ENCODE measurements at regions of chr12 and their contacts with region 1.

Region 1: GRCh38 chr12:4829161-4829792 is 80.4 kb upstream of the KCNA1 start:
- DNase-seq: no peak
- ATAC-seq: peak; percentile 87
- H3K4me3 Mint-ChIP-seq: peak overlapping the region; percentile 76
- H3K27ac Mint-ChIP-seq: peak overlapping the region; percentile 93
- H3K4me1 Mint-ChIP-seq: peaks cover 87% of the 10 kb centered on the region
- H3K27me3 Mint-ChIP-seq: no peaks in the 10 kb centered on the region
- CTCF ChIP-seq: no peak

Region 2: DNA sequence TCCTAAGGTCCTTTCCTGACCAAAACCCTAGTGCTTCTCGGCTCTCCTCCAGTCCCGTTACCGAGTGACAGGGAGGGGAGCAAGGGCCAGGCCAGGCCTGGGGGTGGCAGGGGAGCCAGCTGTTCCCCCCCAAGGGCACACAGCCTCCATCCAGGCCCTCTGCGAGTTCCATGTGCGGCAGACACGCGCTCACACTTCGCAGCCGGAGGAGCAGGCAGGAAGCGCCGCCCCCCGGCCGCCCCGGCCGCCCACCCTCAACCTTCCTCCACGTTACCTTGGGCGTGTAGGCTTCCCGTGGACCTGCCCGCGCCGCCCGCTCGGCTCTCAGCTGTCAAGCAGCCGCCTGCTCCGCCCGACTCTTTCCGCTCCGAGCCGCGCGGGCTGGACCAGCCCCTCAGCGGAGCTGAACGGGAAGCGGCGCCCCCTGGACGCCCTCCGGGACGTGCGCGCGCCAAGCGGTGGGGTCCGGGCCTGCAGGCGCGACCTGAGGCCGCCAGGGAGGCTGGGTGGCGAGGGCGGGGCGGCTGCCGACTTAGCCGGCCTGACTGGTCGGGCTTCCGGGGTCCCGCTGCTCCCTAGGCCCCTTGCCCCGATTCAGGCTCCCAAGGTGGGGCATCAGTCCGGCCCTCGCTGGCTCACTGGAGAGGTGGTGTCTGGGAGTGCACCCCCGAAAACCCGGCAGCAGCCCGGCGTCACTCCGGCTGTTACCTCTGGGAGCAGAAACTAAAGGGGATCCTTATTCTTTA is 1076.4 kb before region 1 on chr12 and contains the start of gene CRACR2A:
- CTCF ChIA-PET with region 1: no interaction called
- POLR2A ChIA-PET with region 1: no interaction called
- intact Hi-C with region 1: loop called (anchors 5 kb)
- DNase-seq: peak; percentile 85
- ATAC-seq: peak; percentile 87
- H3K4me3 Mint-ChIP-seq: peak within 1 kb of the TSS; percentile 88
- H3K27ac Mint-ChIP-seq: peak within 1 kb of the TSS; percentile 93
- H3K4me1 Mint-ChIP-seq: peaks cover 25% of the 10 kb centered on the region
- H3K27me3 Mint-ChIP-seq: no peaks in the 10 kb centered on the region
- CTCF ChIP-seq: no peak
- total RNA-seq, gene CRACR2A: 22.7 and 25.8 TPM in 2 replicates

Region 3: GRCh38 chr12:4894019-4894418 is 64.7 kb after region 1 on chr12:
- CTCF ChIA-PET with region 1: no interaction called
- POLR2A ChIA-PET with region 1: no interaction called
- intact Hi-C with region 1: no loop called
- DNase-seq: no peak
- ATAC-seq: no peak
- H3K4me3 Mint-ChIP-seq: no peak overlapping the region
- H3K27ac Mint-ChIP-seq: no peak overlapping the region
- H3K4me1 Mint-ChIP-seq: no peaks in the 10 kb centered on the region
- H3K27me3 Mint-ChIP-seq: peaks cover 26% of the 10 kb centered on the region
- CTCF ChIP-seq: no peak

Region 4: DNA sequence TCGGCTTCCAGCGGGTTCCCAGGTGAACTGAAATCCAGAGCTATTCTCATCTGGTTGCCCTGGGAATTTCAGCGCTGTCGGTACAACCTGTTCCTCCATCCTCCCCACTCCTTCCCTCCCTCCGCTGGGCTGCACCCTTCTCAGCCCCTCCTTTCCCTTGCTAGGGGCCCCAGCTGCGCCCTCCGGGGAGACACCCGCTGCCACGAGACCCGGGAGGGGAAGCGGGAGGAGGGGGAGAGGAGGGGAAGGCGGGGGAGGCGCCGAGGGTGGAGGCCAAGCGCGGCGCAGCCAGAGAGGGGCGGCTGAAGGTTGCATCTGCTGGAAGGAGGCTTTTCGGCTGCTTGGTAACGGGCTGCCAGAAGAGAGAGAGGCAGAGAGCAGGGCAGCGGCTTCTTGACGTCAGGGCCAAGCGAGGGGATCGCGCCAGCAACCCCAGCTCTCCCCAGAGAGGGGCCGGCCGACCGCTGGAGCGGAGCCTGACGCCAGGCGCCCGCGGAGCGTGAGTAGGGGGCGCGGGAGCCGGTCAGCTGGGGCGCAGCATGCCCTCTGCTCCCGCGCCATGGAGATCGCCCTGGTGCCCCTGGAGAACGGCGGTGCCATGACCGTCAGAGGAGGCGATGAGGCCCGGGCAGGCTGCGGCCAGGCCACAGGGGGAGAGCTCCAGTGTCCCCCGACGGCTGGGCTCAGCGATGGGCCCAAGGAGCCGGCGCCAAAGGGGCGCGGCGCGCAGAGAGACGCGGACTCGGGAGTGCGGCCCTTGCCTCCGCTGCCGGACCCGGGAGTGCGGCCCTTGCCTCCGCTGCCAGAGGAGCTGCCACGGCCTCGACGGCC is 214.5 kb after region 1 on chr12 and contains the start of gene KCNA5:
- CTCF ChIA-PET with region 1: no interaction called
- POLR2A ChIA-PET with region 1: no interaction called
- intact Hi-C with region 1: loop called (anchors 1 kb)
- DNase-seq: peak; percentile 39
- ATAC-seq: peak; percentile 85
- H3K4me3 Mint-ChIP-seq: peak within 1 kb of the TSS; percentile 47
- H3K27ac Mint-ChIP-seq: no peak within 1 kb of the TSS
- H3K4me1 Mint-ChIP-seq: peaks cover 43% of the 10 kb centered on the region
- H3K27me3 Mint-ChIP-seq: peaks cover 34% of the 10 kb centered on the region
- CTCF ChIP-seq: no peak
- total RNA-seq, gene KCNA5: 0.42 and 0.81 TPM in 2 replicates

Measured in activated B cell treated with CpG ODN at 0.5 μM for 24 hours (primary cell).